Activated B cell treated with CpG ODN at 0.5 μM for 24 hours (primary cell): ENCODE measurements at regions of chr19 and their contacts with region 1.

Region 1: GRCh38 chr19:41821003-41821735 is 23.3 kb downstream of the LYPD4 start:
- DNase-seq: no peak
- ATAC-seq: peak; percentile 97
- H3K4me3 Mint-ChIP-seq: no peak overlapping the region
- H3K27ac Mint-ChIP-seq: no peak overlapping the region
- H3K4me1 Mint-ChIP-seq: no peaks in the 10 kb centered on the region
- H3K27me3 Mint-ChIP-seq: peaks cover 17% of the 10 kb centered on the region
- CTCF ChIP-seq: no peak

Region 2: GRCh38 chr19:41641879-41642485 is 179.2 kb before region 1 on chr19:
- CTCF ChIA-PET with region 1: interaction called, 10 read pairs
- POLR2A ChIA-PET with region 1: no interaction called
- intact Hi-C with region 1: loop called (anchors 5 kb)
- DNase-seq: no peak
- ATAC-seq: no peak
- H3K4me3 Mint-ChIP-seq: no peak overlapping the region
- H3K27ac Mint-ChIP-seq: no peak overlapping the region
- H3K4me1 Mint-ChIP-seq: no peaks in the 10 kb centered on the region
- H3K27me3 Mint-ChIP-seq: peaks cover 40% of the 10 kb centered on the region
- CTCF ChIP-seq: peak; percentile 94

Region 3: DNA sequence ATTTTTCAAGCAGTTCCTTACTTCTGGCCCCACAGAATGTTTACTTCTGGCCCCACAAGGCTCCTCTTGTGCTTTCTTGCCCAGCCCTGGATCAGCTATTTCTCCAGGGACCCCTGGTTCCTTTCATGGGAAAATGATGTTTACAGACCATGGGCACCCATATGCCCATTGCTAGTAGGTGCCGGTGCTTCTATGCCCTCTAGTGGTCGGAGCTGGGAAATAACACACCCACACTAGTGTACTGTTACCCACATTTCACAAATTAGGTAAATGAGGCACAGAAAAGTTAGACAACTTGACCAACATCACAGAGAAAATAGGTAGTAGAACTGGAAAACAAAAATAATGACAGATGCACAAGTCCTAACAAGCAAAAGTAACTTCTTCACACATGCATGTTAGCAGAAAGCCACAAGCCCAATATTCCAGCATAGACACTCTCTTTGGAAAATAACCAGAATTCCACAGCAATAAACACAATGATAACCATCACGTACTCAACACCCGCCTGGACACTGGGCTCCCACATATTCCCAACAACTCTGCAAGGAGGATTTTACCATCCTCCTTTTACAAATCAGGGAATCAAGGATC is 67.1 kb before region 1 on chr19:
- CTCF ChIA-PET with region 1: interaction called, 32 read pairs
- POLR2A ChIA-PET with region 1: interaction called, 3 read pairs
- intact Hi-C with region 1: loop called (anchors 1 kb)
- DNase-seq: peak; percentile 35
- ATAC-seq: peak; percentile 90
- H3K4me3 Mint-ChIP-seq: no peak overlapping the region
- H3K27ac Mint-ChIP-seq: no peak overlapping the region
- H3K4me1 Mint-ChIP-seq: peaks cover 2% of the 10 kb centered on the region
- H3K27me3 Mint-ChIP-seq: peaks cover 13% of the 10 kb centered on the region
- CTCF ChIP-seq: peak; percentile 5

Region 4: GRCh38 chr19:41785653-41786052 is 35.5 kb before region 1 on chr19:
- CTCF ChIA-PET with region 1: interaction called, 206 read pairs
- POLR2A ChIA-PET with region 1: no interaction called
- intact Hi-C with region 1: no loop called
- DNase-seq: peak; percentile 36
- ATAC-seq: peak; percentile 92
- H3K4me3 Mint-ChIP-seq: peak overlapping the region; percentile 61
- H3K27ac Mint-ChIP-seq: no peak overlapping the region
- H3K4me1 Mint-ChIP-seq: peaks cover 24% of the 10 kb centered on the region
- H3K27me3 Mint-ChIP-seq: peaks cover 16% of the 10 kb centered on the region
- CTCF ChIP-seq: no peak

Region 5: DNA sequence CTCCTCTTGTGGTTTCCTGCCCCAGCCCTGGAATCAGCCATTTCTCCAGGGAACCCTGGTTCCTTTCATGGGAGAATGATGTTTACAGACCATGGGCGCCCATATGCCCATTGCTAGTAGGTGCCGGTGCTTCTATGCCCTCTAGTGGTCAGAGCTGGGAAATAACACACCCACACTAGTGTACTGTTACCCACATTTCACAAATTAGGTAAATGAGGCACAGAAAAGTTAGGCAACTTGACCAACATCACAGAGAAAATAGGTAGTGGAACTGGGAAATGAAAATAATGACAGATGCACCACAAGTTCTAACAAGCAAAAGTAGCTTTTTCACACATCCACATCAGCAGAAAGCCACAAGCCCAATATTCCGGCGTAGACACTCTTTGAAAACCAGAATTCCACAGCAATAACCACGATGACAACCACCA is 26.1 kb before region 1 on chr19:
- CTCF ChIA-PET with region 1: interaction called, 206 read pairs
- POLR2A ChIA-PET with region 1: interaction called, 9 read pairs
- intact Hi-C with region 1: loop called (anchors 1 kb)
- DNase-seq: no peak
- ATAC-seq: peak; percentile 97
- H3K4me3 Mint-ChIP-seq: no peak overlapping the region
- H3K27ac Mint-ChIP-seq: no peak overlapping the region
- H3K4me1 Mint-ChIP-seq: peaks cover 9% of the 10 kb centered on the region
- H3K27me3 Mint-ChIP-seq: peaks cover 17% of the 10 kb centered on the region
- CTCF ChIP-seq: no peak

Region 6: GRCh38 chr19:41801792-41802211 is 19.4 kb before region 1 on chr19:
- CTCF ChIA-PET with region 1: interaction called, 206 read pairs
- POLR2A ChIA-PET with region 1: interaction called, 6 read pairs
- intact Hi-C with region 1: no loop called
- DNase-seq: no peak
- ATAC-seq: peak; percentile 71
- H3K4me3 Mint-ChIP-seq: peak overlapping the region; percentile 28
- H3K27ac Mint-ChIP-seq: peak overlapping the region; percentile 79
- H3K4me1 Mint-ChIP-seq: peaks cover 48% of the 10 kb centered on the region
- H3K27me3 Mint-ChIP-seq: no peaks in the 10 kb centered on the region
- CTCF ChIP-seq: no peak